GM12878 (cell line): ENCODE measurements at regions of chr7 and their contacts with region 1.

Region 1: DNA sequence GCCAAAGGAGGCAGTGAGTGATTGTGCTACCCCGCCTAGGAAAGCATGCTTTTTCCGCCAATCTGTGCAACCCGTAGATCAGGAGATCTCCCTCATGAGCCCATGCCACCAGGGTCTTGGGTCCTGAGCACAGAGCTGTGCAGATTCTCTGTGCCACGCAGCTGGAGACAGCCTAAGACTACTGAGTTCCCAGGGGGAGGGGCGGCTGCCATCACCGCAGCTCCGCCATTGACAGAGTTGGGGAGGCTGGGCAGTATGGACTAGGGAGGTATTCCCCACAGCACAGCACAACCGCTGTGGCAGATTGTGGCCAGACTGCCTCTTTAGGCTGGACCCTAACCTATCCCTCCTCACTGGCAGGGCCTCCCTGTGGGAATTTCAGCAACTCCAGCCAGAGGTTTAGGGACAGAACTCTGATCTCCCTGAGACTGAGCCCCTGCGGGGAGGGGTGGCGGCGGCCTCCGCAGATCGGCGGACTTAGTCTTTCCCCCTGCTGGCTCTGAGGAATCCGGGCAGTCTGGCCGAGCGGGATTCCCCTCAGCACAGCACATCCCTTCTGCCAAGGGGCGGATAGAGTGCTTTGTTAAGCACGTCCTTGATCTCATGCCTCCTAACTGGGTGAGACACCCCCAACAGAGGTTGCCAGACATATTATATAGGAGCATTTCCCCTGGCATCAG is 224.4 kb upstream of the NPY start:
- DNase-seq: no peak
- ATAC-seq: no peak
- H3K4me3 ChIP-seq: no peak overlapping the region
- H3K27ac ChIP-seq: no peak overlapping the region
- H3K4me1 ChIP-seq: no peaks in the 10 kb centered on the region
- H3K27me3 ChIP-seq: no peaks in the 10 kb centered on the region
- CTCF ChIP-seq: no peak
- EP300 ChIP-seq: no peak
- POLR2A ChIP-seq: no peak
- RAD21 ChIP-seq: no peak

Region 2: DNA sequence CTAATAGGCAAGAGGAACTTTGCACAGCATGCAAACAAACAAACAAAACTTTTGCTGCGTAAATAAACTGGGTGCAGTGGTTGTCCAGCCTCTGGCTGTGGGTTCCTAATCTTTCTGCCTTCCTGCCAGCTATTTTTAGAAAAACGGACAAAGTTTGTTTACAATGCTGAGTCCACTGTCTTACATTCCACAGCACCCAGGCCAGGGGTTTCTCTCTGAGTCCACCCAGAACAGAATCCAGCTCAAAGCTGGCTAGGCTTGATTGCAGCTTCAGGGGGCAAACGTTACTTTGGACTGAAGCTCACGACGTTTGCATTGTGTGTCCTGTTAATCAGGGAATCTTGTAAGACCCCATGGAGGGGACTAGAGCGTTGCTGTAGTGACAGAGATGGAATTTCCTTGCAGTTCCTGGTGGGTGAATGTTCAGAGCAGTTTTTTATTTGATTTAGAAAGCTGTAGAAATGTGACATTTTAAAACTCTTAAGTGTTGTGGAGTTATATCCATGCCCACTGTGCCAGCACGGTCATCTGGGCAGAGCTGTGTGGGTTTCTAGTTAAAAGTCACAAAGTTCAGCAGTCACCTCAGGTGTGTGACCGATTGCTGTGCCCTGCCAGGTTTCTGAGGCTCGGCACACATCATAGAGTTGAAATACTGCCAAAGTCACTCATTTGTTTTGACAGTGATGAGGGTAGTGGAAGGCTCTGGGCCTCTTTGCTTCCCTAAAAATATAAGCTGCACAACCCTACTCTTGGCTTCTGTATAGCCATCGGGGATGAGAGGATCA is 102.7 kb before region 1 on chr7:
- CTCF ChIA-PET with region 1: no interaction called
- POLR2A ChIA-PET with region 1: no interaction called
- RAD21 ChIA-PET with region 1: no interaction called
- SMC1A ChIA-PET with region 1: no interaction called
- in situ Hi-C with region 1: no loop called
- intact Hi-C with region 1: no loop called
- DNase-seq: no peak
- ATAC-seq: no peak
- H3K4me3 ChIP-seq: no peak overlapping the region
- H3K27ac ChIP-seq: no peak overlapping the region
- H3K4me1 ChIP-seq: no peaks in the 10 kb centered on the region
- H3K27me3 ChIP-seq: no peaks in the 10 kb centered on the region
- CTCF ChIP-seq: no peak
- EP300 ChIP-seq: no peak
- POLR2A ChIP-seq: no peak
- RAD21 ChIP-seq: no peak

Region 3: DNA sequence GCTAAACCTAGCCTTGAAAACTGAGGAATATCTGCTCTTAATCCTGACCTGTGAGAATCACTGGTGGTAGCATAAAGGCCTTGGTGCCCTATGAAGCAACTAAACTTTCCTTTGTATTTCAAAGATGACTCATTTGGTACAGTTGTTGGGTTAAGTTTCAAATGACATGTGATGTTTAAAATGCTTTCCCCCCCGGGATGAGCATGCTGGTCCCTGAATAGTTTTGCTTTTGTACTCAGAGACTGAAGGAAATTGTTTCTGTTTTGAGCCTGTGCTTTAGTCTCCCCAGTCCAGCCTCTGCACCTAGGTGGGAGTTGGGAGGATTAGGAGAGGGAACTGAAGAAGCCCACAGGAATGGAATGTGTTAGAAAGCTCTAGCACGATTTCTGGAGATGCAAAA is 34.5 kb before region 1 on chr7:
- CTCF ChIA-PET with region 1: no interaction called
- POLR2A ChIA-PET with region 1: no interaction called
- RAD21 ChIA-PET with region 1: no interaction called
- SMC1A ChIA-PET with region 1: no interaction called
- in situ Hi-C with region 1: no loop called
- intact Hi-C with region 1: no loop called
- DNase-seq: no peak
- ATAC-seq: peak; percentile 34; the same call in 2 of the 3 replicates
- H3K4me3 ChIP-seq: no peak overlapping the region
- H3K27ac ChIP-seq: no peak overlapping the region
- H3K4me1 ChIP-seq: no peaks in the 10 kb centered on the region
- H3K27me3 ChIP-seq: no peaks in the 10 kb centered on the region
- CTCF ChIP-seq: no peak
- EP300 ChIP-seq: no peak
- POLR2A ChIP-seq: no peak
- RAD21 ChIP-seq: no peak

Region 4: DNA sequence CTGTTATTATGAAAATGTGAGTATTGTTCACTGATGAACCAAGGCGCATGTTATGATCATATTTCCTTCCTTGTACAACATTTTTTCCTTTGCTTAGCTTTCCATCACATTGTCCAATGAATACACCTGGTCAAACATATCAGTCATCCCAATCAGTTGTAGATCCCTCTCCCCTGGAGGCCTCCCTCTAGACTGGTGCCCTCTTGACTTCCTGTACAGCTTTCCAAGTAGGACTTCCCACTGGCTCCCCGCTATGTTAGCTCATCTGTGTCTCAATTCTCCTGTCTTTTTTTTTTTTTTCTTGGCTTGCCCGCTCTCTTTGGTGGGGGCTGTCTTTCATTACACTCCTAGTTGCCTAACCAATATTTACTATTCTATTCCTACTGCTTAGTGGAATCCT is 10.1 kb after region 1 on chr7:
- CTCF ChIA-PET with region 1: interaction called, 10 read pairs
- POLR2A ChIA-PET with region 1: no interaction called
- RAD21 ChIA-PET with region 1: no interaction called
- SMC1A ChIA-PET with region 1: no interaction called
- in situ Hi-C with region 1: no loop called
- intact Hi-C with region 1: no loop called
- DNase-seq: no peak
- ATAC-seq: no peak
- H3K4me3 ChIP-seq: no peak overlapping the region
- H3K27ac ChIP-seq: no peak overlapping the region
- H3K4me1 ChIP-seq: no peaks in the 10 kb centered on the region
- H3K27me3 ChIP-seq: no peaks in the 10 kb centered on the region; a peak in 1 of 4 replicates
- CTCF ChIP-seq: no peak
- EP300 ChIP-seq: no peak
- POLR2A ChIP-seq: no peak
- RAD21 ChIP-seq: no peak

Region 5: DNA sequence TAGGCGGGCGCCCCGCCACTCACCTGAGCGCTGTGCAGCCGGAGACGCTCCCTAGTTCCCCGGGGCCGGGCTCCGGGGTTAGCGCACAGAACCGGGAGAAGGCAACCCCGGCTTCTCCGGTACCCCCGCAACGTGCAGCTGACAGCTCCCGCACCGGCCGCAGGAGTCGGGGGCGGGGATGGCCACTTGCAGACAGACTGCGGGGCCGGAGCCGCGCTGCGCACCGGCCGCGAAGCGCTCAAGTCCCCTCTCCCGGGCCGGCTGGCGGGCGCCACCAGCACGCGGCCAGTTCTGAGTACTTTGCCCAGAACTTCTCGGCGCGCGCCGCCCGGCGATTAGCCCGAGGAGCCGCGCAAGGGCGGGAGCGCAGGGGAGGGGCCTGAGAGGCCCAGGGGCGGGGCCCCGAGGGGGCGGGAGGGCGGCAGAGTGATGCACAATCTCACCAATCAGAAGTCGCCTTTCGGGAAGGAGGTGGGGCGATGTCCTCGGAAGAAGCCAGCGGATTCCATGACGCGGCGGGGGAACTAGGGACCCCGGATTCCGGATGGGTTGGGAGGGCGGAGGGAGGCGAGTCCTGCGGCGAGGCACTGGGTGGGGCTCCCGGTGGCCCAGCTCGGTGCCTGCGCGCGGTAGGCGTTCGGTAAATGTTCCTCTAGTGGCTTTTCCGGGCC is 920.4 kb after region 1 on chr7 and contains the start of gene OSBPL3:
- CTCF ChIA-PET with region 1: no interaction called
- POLR2A ChIA-PET with region 1: no interaction called
- RAD21 ChIA-PET with region 1: no interaction called
- SMC1A ChIA-PET with region 1: no interaction called
- in situ Hi-C with region 1: no loop called
- intact Hi-C with region 1: no loop called
- DNase-seq: peak; percentile 78
- ATAC-seq: peak; percentile 81
- H3K4me3 ChIP-seq: peak within 1 kb of the TSS; percentile 78
- H3K27ac ChIP-seq: peak within 1 kb of the TSS; percentile 78
- H3K4me1 ChIP-seq: peaks cover 5% of the 10 kb centered on the region
- H3K27me3 ChIP-seq: no peaks in the 10 kb centered on the region
- CTCF ChIP-seq: peak in 1 of 3 experiments; percentile 44; a peak in 2 of 6 replicates
- EP300 ChIP-seq: no peak
- POLR2A ChIP-seq: peak; percentile 87
- RAD21 ChIP-seq: peak; percentile 48
- polyA plus RNA-seq, gene OSBPL3: 6.1 to 15.2 TPM